ENCODE measurements at regions of chr19 and their contacts with region 1.

Region 1: DNA sequence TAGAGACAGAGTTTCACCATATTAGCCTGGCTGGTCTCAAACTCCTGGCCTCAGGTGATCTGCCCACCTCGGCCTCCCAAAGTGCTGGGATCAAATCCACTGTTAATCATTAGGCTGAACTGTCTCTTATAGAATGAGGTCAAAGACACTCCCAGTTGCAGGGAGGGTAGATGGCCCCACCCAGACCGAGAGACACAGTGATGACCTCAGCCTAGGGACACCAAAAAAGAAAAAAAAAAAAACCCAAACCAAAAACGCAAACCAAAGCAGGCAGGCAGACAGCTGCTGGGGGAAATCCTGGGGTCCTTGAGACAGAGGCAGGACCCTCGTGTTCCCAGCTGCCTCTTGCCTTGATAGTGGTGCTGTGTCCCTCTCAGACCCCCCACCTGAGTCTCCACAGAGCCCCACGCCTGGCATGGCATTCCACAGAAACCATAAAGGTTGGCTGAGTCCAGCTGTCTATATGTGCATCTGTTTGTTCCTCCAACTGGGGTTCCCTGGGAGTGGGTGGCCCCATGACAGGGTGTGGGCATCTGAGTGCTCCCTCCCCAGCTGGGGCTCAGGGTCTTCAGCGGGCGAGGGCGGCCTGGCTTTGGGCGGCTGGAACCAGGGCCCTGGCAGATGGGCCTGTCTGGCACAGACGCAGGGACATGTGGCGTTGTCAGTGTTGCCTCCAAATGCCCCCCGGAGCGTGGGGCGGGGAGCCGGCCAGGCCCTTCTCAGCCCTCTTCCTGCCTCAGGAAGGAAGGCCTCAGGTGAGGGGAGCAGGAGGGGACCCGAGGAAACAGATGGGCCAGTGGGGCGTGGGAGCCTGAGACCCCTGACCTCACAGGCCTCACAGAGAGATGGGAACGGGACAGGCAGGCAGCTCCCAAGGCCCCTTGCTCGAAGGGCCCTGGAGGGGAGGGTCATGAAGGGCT is 5.2 kb downstream of the DAND5 start:
- DNase-seq: no peak
- CTCF ChIP-seq: no peak

Region 2: GRCh38 chr19:12881172-12881808 is 93.3 kb before region 1 on chr19 and contains the start of gene DNASE2:
- CTCF ChIA-PET with region 1: interaction called, 10 read pairs
- POLR2A ChIA-PET with region 1: no interaction called
- DNase-seq: peak; percentile 97
- CTCF ChIP-seq: no peak

Region 3: GRCh38 chr19:12913011-12913561 is 61.5 kb before region 1 on chr19:
- CTCF ChIA-PET with region 1: no interaction called
- POLR2A ChIA-PET with region 1: no interaction called
- DNase-seq: no peak
- CTCF ChIP-seq: no peak

Region 4: DNA sequence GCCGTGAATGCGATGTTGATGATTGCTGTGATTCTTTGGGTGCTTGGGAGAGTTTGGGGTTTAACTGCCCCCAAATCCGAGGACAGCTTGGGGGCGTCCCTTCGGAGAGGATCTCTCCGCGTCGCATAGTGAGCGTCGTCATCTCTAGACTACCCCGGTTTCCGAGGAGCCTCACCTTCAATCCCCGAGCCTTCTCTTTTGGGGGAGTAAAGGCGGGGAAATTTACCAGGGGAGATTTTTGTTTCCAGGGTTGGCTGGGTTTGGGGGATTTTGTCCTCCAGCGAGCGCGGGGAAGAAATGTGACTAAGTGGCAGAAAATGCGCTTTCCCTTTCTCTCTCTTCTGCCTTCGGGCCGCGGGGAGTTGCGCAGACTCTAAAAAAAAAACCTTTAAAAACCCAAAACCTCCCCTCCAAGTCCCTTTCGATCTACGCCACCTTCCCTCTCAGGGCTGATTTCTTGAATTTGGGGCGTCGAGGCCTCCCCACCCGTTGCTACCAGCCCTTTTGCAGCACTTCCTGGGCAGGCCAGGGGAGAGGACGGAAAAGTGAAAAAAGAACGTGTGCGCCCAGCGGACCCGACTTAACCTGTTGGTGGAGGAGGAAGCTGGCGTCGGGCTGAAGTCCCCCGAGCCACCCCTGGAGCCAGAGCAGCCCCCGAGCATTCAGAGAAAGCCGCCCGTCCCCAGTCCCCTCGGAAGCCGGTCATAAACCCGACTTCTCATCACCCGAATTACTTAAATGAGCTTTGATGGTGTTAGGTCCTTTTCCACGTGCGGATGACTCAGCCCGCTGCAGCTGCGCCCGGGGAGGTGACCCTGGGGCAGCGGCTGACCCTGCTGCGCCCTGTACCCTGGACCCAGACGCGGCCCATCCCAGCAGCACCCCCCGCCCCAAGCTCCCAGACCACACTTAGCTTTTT is 38.4 kb after region 1 on chr19:
- CTCF ChIA-PET with region 1: interaction called, 17 read pairs
- POLR2A ChIA-PET with region 1: no interaction called
- DNase-seq: peak; percentile 62
- CTCF ChIP-seq: no peak

Region 5: DNA sequence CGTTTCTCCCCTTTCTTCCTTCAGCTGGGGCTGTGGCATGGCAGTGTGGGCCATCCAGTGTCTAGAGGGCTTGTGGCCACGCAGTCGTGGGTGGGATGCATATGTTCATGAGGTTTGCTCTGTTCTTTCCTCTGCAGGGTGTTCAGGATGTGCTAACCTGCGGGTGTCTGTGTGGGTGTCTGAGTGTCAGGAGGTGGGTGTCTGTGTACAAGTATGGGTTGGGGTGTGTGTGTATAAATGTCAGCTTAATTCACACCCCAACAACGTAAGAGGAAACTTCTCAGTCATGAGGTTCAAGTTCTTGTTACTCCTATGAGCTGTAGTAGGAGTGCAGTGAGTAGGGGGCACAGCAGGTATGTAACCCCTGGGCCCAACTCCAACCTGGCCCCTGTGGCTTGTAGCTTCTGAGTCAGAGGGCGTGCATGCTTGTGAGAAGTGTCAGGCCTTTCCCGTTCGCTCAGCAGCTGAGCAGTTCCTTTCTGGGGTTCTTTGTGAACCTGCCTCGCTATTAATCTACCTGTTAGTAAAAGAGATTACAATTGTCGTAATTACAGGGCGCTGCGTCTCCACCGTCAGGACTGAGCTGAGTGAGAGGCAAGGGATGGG is 69.8 kb after region 1 on chr19:
- CTCF ChIA-PET with region 1: interaction called, 10 read pairs
- POLR2A ChIA-PET with region 1: interaction called, 4 read pairs
- DNase-seq: no peak
- CTCF ChIP-seq: no peak

Region 6: GRCh38 chr19:13069415-13070359 is 95.1 kb after region 1 on chr19:
- CTCF ChIA-PET with region 1: interaction called, 270 read pairs
- POLR2A ChIA-PET with region 1: no interaction called
- DNase-seq: no peak
- CTCF ChIP-seq: no peak

Region 7: GRCh38 chr19:13093407-13094105 is 119.0 kb after region 1 on chr19:
- CTCF ChIA-PET with region 1: interaction called, 183 read pairs
- POLR2A ChIA-PET with region 1: no interaction called
- DNase-seq: peak; percentile 92
- CTCF ChIP-seq: peak; percentile 92

Measured in GM10248 (cell line).